ENCODE measurements at regions of chr9 and their contacts with region 1.

Region 1: GRCh38 chr9:5186416-5187169 is 1.2 kb upstream of the INSL6 start:
- DNase-seq: no peak
- ATAC-seq: peak; percentile 93
- H3K4me3 ChIP-seq: no peak overlapping the region
- H3K27ac ChIP-seq: no peak overlapping the region
- H3K4me1 ChIP-seq: no peaks in the 10 kb centered on the region
- H3K27me3 ChIP-seq: no peaks in the 10 kb centered on the region
- CTCF ChIP-seq: peak; percentile 76

Region 2: GRCh38 chr9:5499889-5500398 is 313.4 kb after region 1 on chr9:
- intact Hi-C with region 1: no loop called
- DNase-seq: no peak
- ATAC-seq: peak; percentile 52
- H3K4me3 ChIP-seq: no peak overlapping the region
- H3K27ac ChIP-seq: peak overlapping the region; percentile 82
- H3K4me1 ChIP-seq: peaks cover 21% of the 10 kb centered on the region
- H3K27me3 ChIP-seq: no peaks in the 10 kb centered on the region
- CTCF ChIP-seq: no peak

Region 3: DNA sequence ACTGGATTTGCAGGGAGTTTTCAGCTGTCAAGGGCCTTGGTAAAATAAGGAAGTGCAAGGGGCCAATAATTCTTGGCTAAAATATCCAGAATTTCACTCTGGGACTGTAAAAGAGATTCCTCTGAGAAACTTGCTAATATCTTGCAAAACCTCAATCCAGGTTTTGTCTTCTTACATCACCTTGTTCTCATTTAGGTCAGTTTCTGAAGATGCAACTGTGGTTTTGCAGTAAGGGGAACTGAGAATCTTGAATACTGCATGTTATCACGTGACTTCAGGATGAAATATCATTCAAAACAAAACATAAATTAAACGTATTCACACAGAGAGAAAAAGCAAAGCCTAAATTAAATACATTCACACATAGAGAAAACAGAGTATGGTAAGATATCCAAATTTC is 407.3 kb after region 1 on chr9:
- intact Hi-C with region 1: loop called (anchors 10 kb)
- DNase-seq: no peak
- ATAC-seq: no peak
- H3K4me3 ChIP-seq: no peak overlapping the region
- H3K27ac ChIP-seq: no peak overlapping the region
- H3K4me1 ChIP-seq: no peaks in the 10 kb centered on the region
- H3K27me3 ChIP-seq: no peaks in the 10 kb centered on the region
- CTCF ChIP-seq: no peak